Vagina (tissue), 2 donors: ENCODE measurements at regions of chr15 and their contacts with region 1.

Region 1: DNA sequence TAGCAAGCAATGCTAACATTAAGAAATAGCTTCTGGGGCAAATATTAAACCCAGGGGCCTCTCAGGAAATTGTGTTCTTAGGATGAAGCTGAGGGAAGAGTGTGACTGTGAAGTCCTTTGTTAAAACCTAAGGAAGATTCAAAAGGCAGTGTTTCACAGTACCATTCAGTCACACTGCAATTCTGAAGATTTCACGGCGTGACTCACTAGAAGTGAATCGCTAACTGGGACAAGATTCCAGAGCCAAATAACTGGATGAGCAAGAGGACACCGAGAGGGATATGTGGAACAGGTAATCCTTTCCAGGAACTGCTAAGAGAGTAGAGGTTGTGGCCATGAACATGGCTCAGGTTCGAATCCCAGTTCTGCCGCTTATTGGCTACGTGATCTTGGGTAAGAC is 61.8 kb upstream of the SMAD3 start:
- DNase-seq: no peak
- H3K4me3 ChIP-seq: no peak overlapping the region
- H3K27ac ChIP-seq: no peak overlapping the region
- H3K4me1 ChIP-seq: no peaks in the 10 kb centered on the region
- H3K27me3 ChIP-seq: no peaks in the 10 kb centered on the region
- CTCF ChIP-seq: no peak
- POLR2A ChIP-seq: no peak

Region 2: DNA sequence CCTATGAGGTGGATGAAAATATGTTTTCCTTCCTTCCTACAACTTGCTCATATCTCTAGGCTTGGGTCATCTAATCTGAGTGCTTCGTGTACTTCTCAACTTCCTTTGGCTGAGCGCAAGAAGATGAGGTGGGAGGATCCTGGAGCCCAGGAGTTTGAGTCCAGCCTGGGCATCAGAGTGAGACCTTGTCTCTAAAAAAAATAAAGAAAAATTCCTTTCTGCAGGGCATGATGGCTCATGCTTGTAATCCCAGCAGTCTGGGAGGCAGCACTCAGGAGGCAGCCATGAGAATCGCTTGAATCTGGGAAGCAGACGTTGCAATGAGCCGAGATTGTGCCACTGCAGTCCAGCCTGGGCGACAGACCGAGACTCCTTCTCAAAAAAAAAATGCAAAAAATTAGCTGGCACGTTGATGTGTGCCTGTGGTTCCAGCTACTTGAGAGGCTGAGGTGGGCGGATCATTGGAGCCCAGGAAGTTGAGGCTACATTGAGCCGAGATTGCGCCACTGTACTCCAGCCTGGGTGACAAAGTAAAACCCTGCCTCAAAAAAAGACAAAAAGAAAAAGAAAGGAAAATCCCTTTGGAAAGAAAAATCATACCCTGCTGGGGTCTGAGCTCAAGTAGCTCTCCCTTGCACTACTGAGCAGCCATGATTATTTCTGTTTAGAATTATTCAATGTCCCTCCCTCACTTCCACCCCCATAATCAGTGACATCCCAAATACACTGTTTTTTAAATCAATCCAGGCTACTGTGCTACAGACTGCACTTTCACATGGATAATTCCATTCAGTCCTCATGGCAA is 1162.3 kb before region 1 on chr15:
- intact Hi-C with region 1: loop called (anchors 5 kb)
- DNase-seq: no peak
- H3K4me3 ChIP-seq: no peak overlapping the region
- H3K27ac ChIP-seq: no peak overlapping the region
- H3K4me1 ChIP-seq: peaks cover 4% of the 10 kb centered on the region
- H3K27me3 ChIP-seq: no peaks in the 10 kb centered on the region
- CTCF ChIP-seq: no peak
- POLR2A ChIP-seq: no peak